ENCODE measurements at regions of chr7 and their contacts with region 1.

Region 1: DNA sequence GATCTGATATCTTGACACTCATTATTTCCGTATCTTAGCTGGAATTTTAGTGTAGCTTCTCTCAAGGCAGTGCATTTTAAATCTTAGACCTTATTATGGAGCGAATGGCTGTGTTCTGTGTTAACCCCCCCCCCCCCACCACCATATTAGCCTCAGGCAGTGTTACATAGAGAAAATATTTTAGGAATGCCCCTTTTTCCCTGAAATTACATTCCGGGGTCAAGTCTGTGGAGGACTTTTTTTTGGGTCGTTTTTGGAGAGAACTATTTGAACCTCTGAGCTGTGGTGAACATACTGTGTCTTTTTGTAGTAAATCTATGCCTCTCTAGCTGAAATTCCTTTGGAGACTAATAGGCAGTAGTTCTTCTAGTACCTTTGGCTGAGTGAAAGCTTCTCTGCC is 3.1 kb downstream of the CCDC126 start:
- DNase-seq: peak; percentile 45
- H3K4me3 ChIP-seq: no peak overlapping the region
- H3K27me3 ChIP-seq: 0 out of 2 replicates have a peak, but pooled peaks cover 2% of the 10 kb centered on the region
- CTCF ChIP-seq: no peak

Region 2: DNA sequence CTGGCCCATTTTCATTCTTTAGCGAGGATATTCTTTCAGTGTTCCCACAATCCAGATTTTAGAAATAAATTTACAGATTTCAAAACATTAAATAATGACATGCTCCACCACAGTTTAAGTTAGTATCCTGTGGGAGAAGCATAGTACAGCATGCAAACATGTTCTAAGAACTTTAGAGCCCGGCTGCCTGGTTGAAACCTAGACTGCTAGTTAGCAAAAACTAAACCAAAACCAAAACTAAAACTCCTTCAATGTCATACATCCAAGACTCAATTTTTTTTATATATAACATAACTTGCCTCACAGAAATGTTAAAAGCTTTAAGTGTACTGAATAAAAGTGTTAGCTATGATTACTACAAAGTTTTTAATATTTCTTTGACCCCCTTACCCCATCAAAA is 85.5 kb before region 1 on chr7:
- CTCF ChIA-PET with region 1: no interaction called
- POLR2A ChIA-PET with region 1: no interaction called
- DNase-seq: no peak
- H3K4me3 ChIP-seq: no peak overlapping the region
- H3K27me3 ChIP-seq: no peaks in the 10 kb centered on the region
- CTCF ChIP-seq: no peak

Region 3: GRCh38 chr7:23672033-23672432 is 71.8 kb after region 1 on chr7:
- CTCF ChIA-PET with region 1: no interaction called
- POLR2A ChIA-PET with region 1: interaction called, 17 read pairs
- DNase-seq: no peak
- H3K4me3 ChIP-seq: no peak overlapping the region
- H3K27me3 ChIP-seq: no peaks in the 10 kb centered on the region; the same call in 1 of the 2 replicates
- CTCF ChIP-seq: no peak

Region 4: DNA sequence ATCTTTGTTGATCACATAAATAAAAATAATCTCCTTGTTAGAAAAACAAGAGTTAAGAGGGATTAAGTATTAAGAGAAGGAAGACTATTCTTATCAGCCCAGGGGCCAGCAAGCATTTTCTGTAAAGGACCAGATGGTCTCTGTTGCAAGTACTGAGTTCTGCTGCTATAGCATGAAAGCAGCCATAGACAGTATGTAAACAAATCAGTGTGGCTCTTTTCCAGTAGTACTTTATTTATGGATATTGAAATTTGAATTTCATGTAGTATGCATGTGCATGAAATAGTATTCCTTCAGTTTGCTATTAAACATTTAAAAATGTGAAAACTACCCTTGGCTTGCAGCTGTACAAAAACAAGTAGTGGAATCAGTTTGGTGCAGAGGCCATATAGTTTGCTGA is 191.5 kb after region 1 on chr7:
- CTCF ChIA-PET with region 1: no interaction called
- POLR2A ChIA-PET with region 1: no interaction called
- DNase-seq: no peak
- H3K4me3 ChIP-seq: no peak overlapping the region
- H3K27me3 ChIP-seq: no peaks in the 10 kb centered on the region
- CTCF ChIP-seq: no peak

Measured in BJ (cell line).